ENCODE measurements at regions of chr10 and their contacts with region 1.

Region 1: DNA sequence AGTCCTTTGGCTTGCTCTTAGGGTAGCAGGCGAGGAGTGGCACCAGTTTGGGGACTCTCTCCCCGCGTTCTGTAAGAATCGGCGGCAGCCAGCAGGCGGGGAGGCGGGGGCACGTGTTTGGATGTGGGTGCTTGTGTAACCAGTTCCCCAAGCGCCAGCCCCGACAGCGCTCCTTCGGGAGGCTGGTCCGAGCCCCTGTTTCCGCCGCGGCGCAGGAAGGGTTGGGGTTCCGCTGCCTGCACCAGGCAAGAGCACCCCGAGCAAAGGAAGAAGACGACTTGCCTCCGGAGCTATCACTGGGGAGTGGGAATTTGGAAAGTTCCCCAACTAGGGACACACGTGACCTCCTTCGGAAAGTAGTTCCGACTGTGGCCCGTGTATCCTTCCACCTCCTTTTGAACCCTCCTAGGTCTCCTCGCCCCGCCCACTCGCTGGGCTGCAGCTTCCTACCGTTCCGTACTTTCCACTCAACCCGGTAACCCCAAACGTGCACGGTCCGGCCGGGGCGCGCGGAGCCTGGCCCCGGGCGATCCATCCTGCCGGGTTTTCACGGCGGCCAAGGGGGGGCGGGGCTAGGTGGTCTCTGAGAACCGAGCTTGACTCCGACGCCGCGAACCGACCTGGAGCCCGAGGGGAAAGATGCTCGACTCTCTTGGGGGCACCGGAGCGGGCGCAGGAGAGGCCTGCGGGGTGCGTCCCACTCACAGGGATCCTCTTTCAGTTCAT is 1.2 kb downstream of the KLLN start:
- DNase-seq: peak; percentile 98 to 99 (median 98)
- ATAC-seq: peak; percentile 93 to 95
- H3K4me3 ChIP-seq: peak overlapping the region; percentile 77
- H3K27ac ChIP-seq: peak overlapping the region; percentile 99
- H3K4me1 ChIP-seq: no peaks in the 10 kb centered on the region
- H3K27me3 ChIP-seq: no peaks in the 10 kb centered on the region

Region 2: DNA sequence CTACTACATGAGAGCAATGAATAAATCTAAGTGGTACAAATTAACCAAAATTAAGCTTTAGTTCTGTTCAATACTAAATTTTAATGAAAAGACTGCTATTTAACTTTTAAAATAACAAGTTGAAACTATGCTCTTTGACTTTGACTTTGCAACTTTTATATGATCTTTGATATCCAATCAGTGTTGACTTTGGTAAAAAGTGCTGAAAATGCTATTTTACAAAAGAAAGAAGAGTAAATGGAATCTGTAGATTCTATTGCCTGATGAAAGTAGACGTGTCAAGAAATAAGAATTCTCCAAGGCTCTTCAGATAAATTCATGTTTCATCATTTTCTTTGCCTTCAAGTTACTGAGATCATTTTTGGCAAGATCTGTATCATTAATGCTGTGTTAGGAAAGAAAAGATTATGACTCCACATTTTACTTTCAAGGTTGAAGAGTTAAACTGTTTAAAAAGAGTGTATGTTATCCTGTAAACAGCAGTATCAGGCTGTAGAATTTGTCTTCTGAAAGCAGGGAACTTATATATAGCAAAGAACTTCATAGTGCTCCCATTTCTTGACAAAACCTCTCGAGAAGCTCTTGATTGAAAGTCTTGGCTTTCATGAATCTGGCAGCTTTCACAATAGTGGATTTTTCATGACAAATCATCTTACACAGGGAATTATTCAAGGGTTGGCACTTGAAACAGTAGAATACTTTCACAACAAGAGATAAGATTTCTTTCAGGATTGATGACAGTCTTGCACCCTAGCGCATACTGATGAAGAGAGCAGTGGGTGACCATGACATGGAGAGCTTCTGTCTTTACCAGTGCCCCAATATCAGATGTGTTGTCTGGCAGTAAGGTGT is 73.4 kb after region 1 on chr10:
- intact Hi-C with region 1: no loop called
- DNase-seq: no peak
- ATAC-seq: peak; percentile 52 to 62
- H3K4me3 ChIP-seq: no peak overlapping the region
- H3K27ac ChIP-seq: no peak overlapping the region
- H3K4me1 ChIP-seq: peaks cover 2% of the 10 kb centered on the region
- H3K27me3 ChIP-seq: no peaks in the 10 kb centered on the region

Region 3: GRCh38 chr10:88114368-88114767 is 252.3 kb after region 1 on chr10:
- intact Hi-C with region 1: loop called in 2 of 4 experiments (anchors 10 kb)
- DNase-seq: peak; percentile 28 to 69 (median 62)
- ATAC-seq: peak; percentile 74 to 79
- H3K4me3 ChIP-seq: no peak overlapping the region
- H3K27ac ChIP-seq: no peak overlapping the region
- H3K4me1 ChIP-seq: no peaks in the 10 kb centered on the region
- H3K27me3 ChIP-seq: no peaks in the 10 kb centered on the region

Region 4: GRCh38 chr10:88227342-88228018 is 365.4 kb after region 1 on chr10:
- intact Hi-C with region 1: loop called in 1 of 4 experiments (anchors 5 kb)
- DNase-seq: peak; percentile 44 to 65 (median 55)
- ATAC-seq: peak; percentile 76 to 81
- H3K4me3 ChIP-seq: no peak overlapping the region
- H3K27ac ChIP-seq: peak overlapping the region; percentile 73
- H3K4me1 ChIP-seq: peaks cover 11% of the 10 kb centered on the region
- H3K27me3 ChIP-seq: no peaks in the 10 kb centered on the region

Region 5: GRCh38 chr10:88243836-88244730 is 382.0 kb after region 1 on chr10:
- intact Hi-C with region 1: loop called in 2 of 4 experiments (anchors 5 to 10 kb)
- DNase-seq: peak; percentile 88 to 93 (median 91)
- ATAC-seq: peak; percentile 94 to 96
- H3K4me3 ChIP-seq: peak overlapping the region; percentile 21
- H3K27ac ChIP-seq: peak overlapping the region; percentile 94
- H3K4me1 ChIP-seq: peaks cover 7% of the 10 kb centered on the region
- H3K27me3 ChIP-seq: no peaks in the 10 kb centered on the region